Mucosa of descending colon (tissue), 3 donors: ENCODE measurements at regions of chr9 and their contacts with region 1.

Region 1: GRCh38 chr9:114405294-114406034 is 17.7 kb upstream of the AKNA start:
- DNase-seq: peak; percentile 72 to 88 (median 76)
- ATAC-seq: peak; percentile 82
- H3K4me3 ChIP-seq: no peak overlapping the region
- H3K4me1 ChIP-seq: peaks cover 17% of the 10 kb centered on the region
- CTCF ChIP-seq: peak; percentile 67

Region 2: DNA sequence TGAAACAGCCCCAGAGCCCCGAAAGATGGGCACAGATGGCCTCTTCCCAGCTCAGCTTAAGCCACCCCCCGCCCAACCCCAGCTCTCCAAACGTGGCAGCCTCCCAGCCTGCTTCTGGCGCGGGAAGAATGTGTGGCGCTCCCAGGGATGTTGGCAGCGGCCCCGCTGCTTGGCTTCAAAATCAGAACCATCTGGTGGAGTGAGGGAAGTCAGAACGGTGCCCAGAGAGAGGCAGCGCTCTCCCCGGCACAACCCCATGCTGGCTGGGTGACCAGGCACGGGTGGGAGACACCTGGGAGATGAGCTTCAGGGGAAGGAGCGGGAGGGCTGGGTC is 155.3 kb before region 1 on chr9:
- intact Hi-C with region 1: no loop called
- DNase-seq: peak; percentile 21 to 67 (median 58)
- ATAC-seq: peak; percentile 45
- H3K4me3 ChIP-seq: no peak overlapping the region
- H3K4me1 ChIP-seq: no peaks in the 10 kb centered on the region
- CTCF ChIP-seq: no peak

Region 3: DNA sequence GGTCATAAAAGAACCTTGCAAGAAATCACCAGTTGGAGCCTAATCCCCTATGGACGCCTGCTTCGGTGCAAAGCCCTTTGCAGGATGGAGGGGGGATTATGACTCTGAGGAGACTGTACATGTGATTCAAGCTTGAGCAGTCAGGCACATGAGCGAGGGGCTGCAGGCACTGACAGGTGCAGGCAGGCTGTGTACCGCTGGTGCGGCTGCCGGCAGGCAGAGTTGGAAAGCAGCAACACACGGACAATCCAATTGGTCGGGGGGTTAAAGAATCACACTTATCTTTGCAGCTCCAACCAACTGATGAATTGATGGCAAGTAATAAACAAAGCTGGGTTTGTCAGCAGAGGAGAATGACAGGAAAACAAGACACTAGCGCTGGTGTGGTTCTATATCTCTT is 94.1 kb after region 1 on chr9:
- intact Hi-C with region 1: loop called in 1 of 2 experiments (anchors 10 kb)
- DNase-seq: no peak
- ATAC-seq: no peak
- H3K4me3 ChIP-seq: no peak overlapping the region
- H3K4me1 ChIP-seq: peaks cover 14% of the 10 kb centered on the region
- CTCF ChIP-seq: no peak

Region 4: GRCh38 chr9:114518599-114519022 is 113.1 kb after region 1 on chr9:
- intact Hi-C with region 1: no loop called
- DNase-seq: peak in 1 of 3 donors; percentile 15
- ATAC-seq: peak; percentile 45
- H3K4me3 ChIP-seq: no peak overlapping the region
- H3K4me1 ChIP-seq: no peaks in the 10 kb centered on the region
- CTCF ChIP-seq: no peak

Region 5: GRCh38 chr9:114538241-114538640 is 132.8 kb after region 1 on chr9:
- intact Hi-C with region 1: no loop called
- DNase-seq: peak; percentile 55 to 66 (median 56)
- ATAC-seq: peak; percentile 100
- H3K4me3 ChIP-seq: no peak overlapping the region
- H3K4me1 ChIP-seq: no peaks in the 10 kb centered on the region
- CTCF ChIP-seq: peak; percentile 34